ENCODE measurements at regions of chr7 and their contacts with region 1.

Region 1: GRCh38 chr7:107150375-107151073 is 18.3 kb upstream of the HBP1 start:
- DNase-seq: peak; percentile 44
- H3K4me3 ChIP-seq: no peak overlapping the region
- H3K27ac ChIP-seq: no peak overlapping the region
- H3K4me1 ChIP-seq: peaks cover 13% of the 10 kb centered on the region
- H3K27me3 ChIP-seq: no peaks in the 10 kb centered on the region
- CTCF ChIP-seq: peak; percentile 50 to 58

Region 2: DNA sequence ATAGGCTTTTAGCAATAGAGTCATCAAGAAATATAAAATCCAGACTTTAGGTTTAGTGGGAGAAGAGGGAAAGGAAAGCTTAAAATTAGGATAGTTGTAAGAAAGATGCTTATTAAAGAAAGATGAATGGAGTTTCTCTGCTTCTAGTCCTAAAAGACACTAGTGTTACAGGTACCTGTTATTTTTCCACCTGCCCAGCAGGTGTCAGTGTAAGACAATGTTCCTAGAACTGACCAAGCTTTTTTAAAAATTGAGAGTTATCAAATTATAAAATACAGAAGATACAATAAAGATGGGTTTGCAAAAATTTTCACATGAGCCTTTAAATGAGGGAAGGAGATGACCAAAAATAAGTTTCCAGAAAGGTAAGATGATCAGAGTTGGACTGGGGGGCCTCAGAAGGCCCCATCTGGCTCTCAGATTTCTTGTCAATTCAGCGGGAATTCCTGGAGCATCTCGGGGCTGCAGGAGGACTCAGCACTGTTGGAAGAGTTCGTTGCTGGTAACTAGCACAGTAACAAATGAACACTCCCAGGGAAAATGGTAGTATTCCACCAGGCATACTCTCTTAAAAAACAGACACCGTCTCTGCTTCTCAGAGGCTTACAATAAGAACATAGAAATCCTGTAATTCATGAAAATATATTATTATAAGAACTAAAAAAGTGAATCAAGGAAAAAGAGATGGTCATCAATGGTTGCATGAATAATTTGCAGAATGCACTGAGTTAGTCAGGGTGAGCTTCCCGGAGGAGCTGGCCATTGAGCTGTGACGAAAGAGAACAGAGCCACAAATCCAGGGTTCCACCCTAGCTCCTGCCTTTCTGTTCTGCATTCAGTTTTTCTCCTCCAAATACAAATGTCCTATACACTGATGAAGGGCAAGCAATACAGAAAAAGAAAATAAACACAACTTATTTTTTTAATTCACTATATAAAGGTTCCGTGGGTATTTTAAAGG is 357.2 kb before region 1 on chr7:
- CTCF ChIA-PET with region 1: no interaction called
- dilution Hi-C with region 1: no loop called
- in situ Hi-C with region 1: loop called (anchors 5 to 10 kb)
- intact Hi-C with region 1: loop called (anchors 1 kb)
- DNase-seq: peak; percentile 12
- H3K4me3 ChIP-seq: no peak overlapping the region
- H3K27ac ChIP-seq: no peak overlapping the region
- H3K4me1 ChIP-seq: no peaks in the 10 kb centered on the region
- H3K27me3 ChIP-seq: peaks cover 5% of the 10 kb centered on the region
- CTCF ChIP-seq: peak; percentile 51 to 71

Region 3: GRCh38 chr7:106959753-106960152 is 190.8 kb before region 1 on chr7:
- CTCF ChIA-PET with region 1: no interaction called
- dilution Hi-C with region 1: no loop called
- in situ Hi-C with region 1: loop called in 1 of 2 experiments (anchors 25 kb)
- intact Hi-C with region 1: no loop called
- DNase-seq: no peak
- H3K4me3 ChIP-seq: no peak overlapping the region
- H3K27ac ChIP-seq: no peak overlapping the region
- H3K4me1 ChIP-seq: no peaks in the 10 kb centered on the region
- H3K27me3 ChIP-seq: peaks cover 5% of the 10 kb centered on the region
- CTCF ChIP-seq: peak in 1 of 2 donors; percentile 7

Region 4: GRCh38 chr7:107501593-107501992 is 351.1 kb after region 1 on chr7:
- CTCF ChIA-PET with region 1: no interaction called
- dilution Hi-C with region 1: no loop called
- in situ Hi-C with region 1: no loop called
- intact Hi-C with region 1: loop called (anchors 5 kb)
- DNase-seq: peak; percentile 23
- H3K4me3 ChIP-seq: no peak overlapping the region
- H3K27ac ChIP-seq: no peak overlapping the region
- H3K4me1 ChIP-seq: peaks cover 15% of the 10 kb centered on the region
- H3K27me3 ChIP-seq: no peaks in the 10 kb centered on the region
- CTCF ChIP-seq: peak; percentile 50 to 57